Panc1 (cell line): ENCODE measurements at regions of chr15 and their contacts with region 1.

Region 1: GRCh38 chr15:74373731-74374647 is 6.5 kb upstream of the CYP11A1 start:
- DNase-seq: no peak
- ATAC-seq: peak; percentile 95
- H3K4me3 ChIP-seq: peak overlapping the region; percentile 62 to 67
- H3K27ac ChIP-seq: peak overlapping the region; percentile 60; the same call in 1 of the 2 replicates
- H3K4me1 ChIP-seq: peaks cover 9% of the 10 kb centered on the region
- H3K27me3 ChIP-seq: no peaks in the 10 kb centered on the region; the same call in 1 of the 2 replicates
- CTCF ChIP-seq: peak; percentile 92

Region 2: GRCh38 chr15:74396445-74397238 is 22.7 kb after region 1 on chr15:
- CTCF ChIA-PET with region 1: no interaction called
- POLR2A ChIA-PET with region 1: no interaction called
- in situ Hi-C with region 1: no loop called
- intact Hi-C with region 1: no loop called
- DNase-seq: peak; percentile 86
- ATAC-seq: peak; percentile 84
- H3K4me3 ChIP-seq: no peak overlapping the region
- H3K27ac ChIP-seq: no peak overlapping the region
- H3K4me1 ChIP-seq: no peaks in the 10 kb centered on the region; the same call in 1 of the 2 replicates
- H3K27me3 ChIP-seq: no peaks in the 10 kb centered on the region
- CTCF ChIP-seq: no peak

Region 3: GRCh38 chr15:74489518-74490338 is 115.7 kb after region 1 on chr15:
- CTCF ChIA-PET with region 1: interaction called, 3 read pairs
- POLR2A ChIA-PET with region 1: no interaction called
- in situ Hi-C with region 1: loop called (anchors 10 kb)
- intact Hi-C with region 1: loop called (anchors 5 kb)
- DNase-seq: peak; percentile 54
- ATAC-seq: peak; percentile 88
- H3K4me3 ChIP-seq: no peak overlapping the region
- H3K27ac ChIP-seq: no peak overlapping the region
- H3K4me1 ChIP-seq: no peaks in the 10 kb centered on the region
- H3K27me3 ChIP-seq: no peaks in the 10 kb centered on the region
- CTCF ChIP-seq: peak; percentile 89

Region 4: GRCh38 chr15:74615508-74616365 is 241.7 kb after region 1 on chr15 and contains the start of gene CLK3:
- CTCF ChIA-PET with region 1: no interaction called
- POLR2A ChIA-PET with region 1: no interaction called
- in situ Hi-C with region 1: no loop called
- intact Hi-C with region 1: loop called (anchors 5 kb)
- DNase-seq: no peak
- ATAC-seq: peak; percentile 92
- H3K4me3 ChIP-seq: peak within 1 kb of the TSS; percentile 90 to 100
- H3K27ac ChIP-seq: peak within 1 kb of the TSS; percentile 96
- H3K4me1 ChIP-seq: peaks cover 15% of the 10 kb centered on the region
- H3K27me3 ChIP-seq: no peaks in the 10 kb centered on the region
- CTCF ChIP-seq: no peak
- total RNA-seq, gene CLK3: 69.8 TPM